CD4-positive, alpha-beta T cell (primary cell): ENCODE measurements at regions of chr5 and their contacts with region 1.

Region 1: DNA sequence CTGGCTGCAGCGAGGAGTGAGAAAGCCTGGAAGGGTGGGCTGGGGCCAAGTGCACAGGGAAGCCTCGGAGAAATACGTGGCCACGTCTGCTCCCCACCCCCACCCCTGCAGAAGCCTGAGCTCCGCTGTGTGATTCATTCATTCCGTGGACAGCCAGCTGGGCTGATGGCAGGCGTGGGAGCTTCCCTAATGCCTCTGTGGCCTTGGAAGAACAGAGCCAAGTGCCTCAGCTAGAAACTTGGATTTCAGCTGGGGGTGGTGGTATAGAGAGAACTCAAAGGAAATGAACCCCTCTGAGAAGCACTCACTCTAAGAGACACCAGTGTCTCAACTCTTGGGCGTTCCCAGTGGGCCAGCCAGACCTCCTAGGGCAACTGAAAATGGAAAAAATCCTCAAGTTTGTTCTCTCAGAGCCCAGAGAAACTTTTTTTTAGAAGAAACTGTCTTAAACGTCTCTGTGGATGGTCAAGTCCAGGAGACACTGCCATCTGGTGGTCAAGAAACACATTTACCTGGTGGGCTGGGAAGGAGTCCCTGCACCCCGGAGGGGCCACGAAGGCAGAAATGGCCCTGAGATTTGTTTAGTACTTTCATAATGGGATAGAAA is 18.0 kb downstream of the ATOX1 start:
- DNase-seq: peak in 10 of 14 experiments; percentile 16 to 79 (median 32)
- ATAC-seq: peak; percentile 82
- H3K4me3 ChIP-seq: no peak overlapping the region
- H3K4me3 Mint-ChIP-seq: no peak overlapping the region
- H3K27ac ChIP-seq: no peak overlapping the region
- H3K27ac Mint-ChIP-seq: no peak overlapping the region
- H3K4me1 ChIP-seq: peaks cover 17% of the 10 kb centered on the region
- H3K4me1 Mint-ChIP-seq: peaks cover 15% of the 10 kb centered on the region
- H3K27me3 ChIP-seq: no peaks in the 10 kb centered on the region
- H3K27me3 Mint-ChIP-seq: no peaks in the 10 kb centered on the region
- CTCF ChIP-seq: peak; percentile 89

Region 2: DNA sequence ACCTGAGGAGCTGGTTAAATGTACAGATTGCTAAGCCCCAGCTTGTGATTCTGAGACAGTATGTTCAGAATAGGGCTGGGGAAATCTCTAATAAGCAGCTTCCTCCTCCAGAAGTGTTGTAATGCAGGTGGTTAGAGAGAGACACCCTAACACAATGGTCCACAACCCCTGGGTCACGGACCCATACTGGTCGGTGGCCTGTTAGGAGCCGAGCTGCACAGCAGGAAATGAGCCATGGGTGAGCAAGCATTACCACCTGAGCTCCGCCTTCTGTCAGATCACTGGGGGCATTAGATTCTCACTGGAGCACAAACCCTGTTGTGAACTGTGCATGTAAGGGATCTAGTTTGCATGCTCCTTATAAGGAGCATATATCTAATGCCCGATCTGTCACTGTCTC is 231.2 kb before region 1 on chr5:
- CTCF ChIA-PET with region 1: no interaction called
- POLR2A ChIA-PET with region 1: no interaction called
- intact Hi-C with region 1: loop called in 1 of 2 experiments (anchors 10 kb)
- DNase-seq: no peak
- ATAC-seq: no peak
- H3K4me3 ChIP-seq: no peak overlapping the region
- H3K4me3 Mint-ChIP-seq: no peak overlapping the region
- H3K27ac ChIP-seq: no peak overlapping the region
- H3K27ac Mint-ChIP-seq: no peak overlapping the region
- H3K4me1 ChIP-seq: no peaks in the 10 kb centered on the region
- H3K4me1 Mint-ChIP-seq: no peaks in the 10 kb centered on the region
- H3K27me3 ChIP-seq: no peaks in the 10 kb centered on the region
- H3K27me3 Mint-ChIP-seq: no peaks in the 10 kb centered on the region
- CTCF ChIP-seq: no peak